ENCODE measurements at regions of chr14 and their contacts with region 1.

Region 1: GRCh38 chr14:66638689-66639088 is 130.7 kb downstream of the GPHN start:
- DNase-seq: peak; percentile 61
- ATAC-seq: peak; percentile 54
- H3K4me3 ChIP-seq: no peak overlapping the region
- H3K27ac ChIP-seq: no peak overlapping the region
- H3K4me1 ChIP-seq: peaks cover 18% of the 10 kb centered on the region
- H3K27me3 ChIP-seq: no peaks in the 10 kb centered on the region
- CTCF ChIP-seq: no peak

Region 2: GRCh38 chr14:65277027-65277426 is 1361.7 kb before region 1 on chr14:
- CTCF ChIA-PET with region 1: no interaction called
- POLR2A ChIA-PET with region 1: no interaction called
- intact Hi-C with region 1: loop called (anchors 10 kb)
- DNase-seq: peak; percentile 78
- ATAC-seq: peak; percentile 88
- H3K4me3 ChIP-seq: no peak overlapping the region
- H3K27ac ChIP-seq: peak overlapping the region; percentile 31
- H3K4me1 ChIP-seq: peaks cover 28% of the 10 kb centered on the region
- H3K27me3 ChIP-seq: no peaks in the 10 kb centered on the region
- CTCF ChIP-seq: no peak

Region 3: GRCh38 chr14:66152747-66153146 is 485.9 kb before region 1 on chr14:
- CTCF ChIA-PET with region 1: no interaction called
- POLR2A ChIA-PET with region 1: no interaction called
- intact Hi-C with region 1: no loop called
- DNase-seq: no peak
- ATAC-seq: no peak
- H3K4me3 ChIP-seq: no peak overlapping the region
- H3K27ac ChIP-seq: no peak overlapping the region
- H3K4me1 ChIP-seq: no peaks in the 10 kb centered on the region
- H3K27me3 ChIP-seq: peaks cover 26% of the 10 kb centered on the region
- CTCF ChIP-seq: no peak